ENCODE measurements at regions of chr5 and their contacts with region 1.

Region 1: DNA sequence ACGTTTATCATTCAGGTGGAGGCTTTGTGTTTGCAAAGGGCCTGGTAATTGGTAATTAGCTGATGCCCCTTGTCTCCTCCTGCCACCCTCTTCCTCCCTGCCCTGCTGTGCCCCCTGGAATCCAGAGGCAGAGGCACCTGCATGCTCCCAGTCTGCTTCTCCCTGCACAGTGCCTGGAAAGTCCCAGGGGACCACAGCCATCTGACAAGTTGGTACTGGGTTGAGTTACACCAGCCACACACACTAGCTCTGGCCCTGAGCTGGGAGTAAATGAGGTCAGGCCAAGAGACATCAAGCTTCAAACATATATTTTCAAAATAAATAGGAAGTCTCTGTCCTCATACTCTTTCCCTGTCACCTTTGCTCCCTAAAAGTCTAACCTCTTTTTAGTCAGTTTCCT is 56.3 kb downstream of the INSYN2B start:
- DNase-seq: peak; percentile 27
- ATAC-seq: peak; percentile 92
- H3K4me3 ChIP-seq: no peak overlapping the region
- H3K27ac ChIP-seq: peak overlapping the region; percentile 52
- H3K4me1 ChIP-seq: peaks cover 5% of the 10 kb centered on the region; the same call in 1 of the 2 replicates
- H3K27me3 ChIP-seq: no peaks in the 10 kb centered on the region
- CTCF ChIP-seq: no peak
- EP300 ChIP-seq: no peak
- POLR2A ChIP-seq: no peak
- RAD21 ChIP-seq: no peak

Region 2: DNA sequence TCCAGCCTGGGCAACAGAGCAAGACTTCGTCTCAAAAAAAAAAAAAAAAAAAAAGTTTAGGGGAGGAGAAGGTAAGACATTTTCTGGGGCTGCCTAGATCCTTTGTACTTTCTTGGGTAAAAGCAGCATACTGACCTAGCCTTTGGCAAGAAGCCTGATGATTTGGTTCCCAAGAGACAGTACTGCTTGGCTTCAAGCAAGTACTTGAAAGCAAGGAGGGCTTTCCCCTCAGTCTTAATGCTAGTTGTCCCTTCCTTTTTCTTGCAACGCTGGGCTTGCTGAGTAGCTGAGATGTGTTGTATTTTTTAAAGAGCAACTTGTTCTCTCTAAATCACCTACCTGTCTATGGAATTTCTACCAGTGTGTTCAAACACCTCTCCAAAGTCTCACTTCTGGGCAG is 19.9 kb before region 1 on chr5:
- CTCF ChIA-PET with region 1: no interaction called
- POLR2A ChIA-PET with region 1: interaction called, 7 read pairs
- RAD21 ChIA-PET with region 1: interaction called, 4 read pairs
- SMC1A ChIA-PET with region 1: interaction called, 10 read pairs
- in situ Hi-C with region 1: no loop called
- intact Hi-C with region 1: no loop called
- DNase-seq: peak; percentile 16
- ATAC-seq: peak; percentile 67
- H3K4me3 ChIP-seq: no peak overlapping the region
- H3K27ac ChIP-seq: no peak overlapping the region
- H3K4me1 ChIP-seq: 0 out of 2 replicates have a peak, but pooled peaks cover 3% of the 10 kb centered on the region
- H3K27me3 ChIP-seq: no peaks in the 10 kb centered on the region
- CTCF ChIP-seq: no peak
- EP300 ChIP-seq: no peak
- POLR2A ChIP-seq: no peak
- RAD21 ChIP-seq: no peak